GM12878 (cell line): ENCODE measurements at regions of chr15 and their contacts with region 1.

Region 1: GRCh38 chr15:44633603-44634002 is 29.9 kb downstream of the SPG11 start:
- DNase-seq: no peak
- ATAC-seq: peak; percentile 76
- H3K4me3 ChIP-seq: no peak overlapping the region
- H3K27ac ChIP-seq: peak overlapping the region; percentile 35; the same call in 1 of the 2 replicates
- H3K4me1 ChIP-seq: no peaks in the 10 kb centered on the region
- H3K27me3 ChIP-seq: no peaks in the 10 kb centered on the region
- CTCF ChIP-seq: no peak
- EP300 ChIP-seq: no peak
- POLR2A ChIP-seq: no peak
- RAD21 ChIP-seq: no peak

Region 2: DNA sequence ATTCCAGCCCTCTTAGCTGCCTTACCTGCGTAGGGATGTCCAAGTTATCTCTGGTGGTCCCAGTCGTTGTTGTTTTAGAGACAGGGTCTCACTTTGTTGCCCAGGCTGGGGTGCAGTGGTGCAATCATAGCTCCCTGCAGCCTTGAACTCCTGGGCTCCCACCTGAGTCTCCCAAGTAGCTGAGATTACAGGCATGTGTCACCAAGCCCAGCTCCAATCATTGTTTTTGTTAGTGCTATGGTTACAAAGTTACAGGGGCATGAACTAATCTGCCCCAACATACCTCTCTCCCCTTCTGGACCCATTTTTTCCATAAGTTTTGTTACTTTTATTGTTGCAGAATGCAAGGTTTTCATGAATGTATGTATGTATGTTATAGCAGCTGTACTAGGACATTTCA is 151.5 kb before region 1 on chr15:
- CTCF ChIA-PET with region 1: no interaction called
- POLR2A ChIA-PET with region 1: interaction called, 10 read pairs
- RAD21 ChIA-PET with region 1: no interaction called
- SMC1A ChIA-PET with region 1: no interaction called
- in situ Hi-C with region 1: no loop called
- intact Hi-C with region 1: no loop called
- DNase-seq: no peak
- ATAC-seq: no peak
- H3K4me3 ChIP-seq: no peak overlapping the region
- H3K27ac ChIP-seq: no peak overlapping the region
- H3K4me1 ChIP-seq: peaks cover 6% of the 10 kb centered on the region; the same call in 1 of the 2 replicates
- H3K27me3 ChIP-seq: no peaks in the 10 kb centered on the region
- CTCF ChIP-seq: no peak
- EP300 ChIP-seq: no peak
- POLR2A ChIP-seq: no peak
- RAD21 ChIP-seq: no peak

Region 3: DNA sequence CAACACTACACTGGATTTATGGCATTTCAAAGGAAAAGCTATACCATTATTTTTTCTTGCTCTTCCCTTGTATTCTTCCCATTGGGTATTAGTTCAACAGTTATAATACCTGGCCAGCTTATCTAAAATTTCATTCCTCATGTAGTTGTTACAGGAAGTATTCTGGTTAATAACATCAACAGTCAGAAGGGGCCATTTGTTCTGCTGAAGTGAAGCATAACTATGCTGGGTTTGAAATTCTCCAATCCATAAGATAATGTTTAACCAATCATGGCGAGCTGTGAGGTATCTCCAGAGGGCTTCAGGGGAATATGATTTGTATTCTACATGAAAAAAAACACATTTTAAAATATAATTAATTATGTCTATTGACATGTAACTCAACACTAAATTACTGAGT is 13.5 kb before region 1 on chr15:
- CTCF ChIA-PET with region 1: interaction called, 14 read pairs
- POLR2A ChIA-PET with region 1: interaction called, 4 read pairs
- RAD21 ChIA-PET with region 1: no interaction called
- SMC1A ChIA-PET with region 1: interaction called, 3 read pairs
- in situ Hi-C with region 1: no loop called
- intact Hi-C with region 1: no loop called
- DNase-seq: no peak
- ATAC-seq: no peak
- H3K4me3 ChIP-seq: no peak overlapping the region
- H3K27ac ChIP-seq: no peak overlapping the region
- H3K4me1 ChIP-seq: no peaks in the 10 kb centered on the region
- H3K27me3 ChIP-seq: no peaks in the 10 kb centered on the region
- CTCF ChIP-seq: no peak
- EP300 ChIP-seq: no peak
- POLR2A ChIP-seq: no peak
- RAD21 ChIP-seq: no peak

Region 4: DNA sequence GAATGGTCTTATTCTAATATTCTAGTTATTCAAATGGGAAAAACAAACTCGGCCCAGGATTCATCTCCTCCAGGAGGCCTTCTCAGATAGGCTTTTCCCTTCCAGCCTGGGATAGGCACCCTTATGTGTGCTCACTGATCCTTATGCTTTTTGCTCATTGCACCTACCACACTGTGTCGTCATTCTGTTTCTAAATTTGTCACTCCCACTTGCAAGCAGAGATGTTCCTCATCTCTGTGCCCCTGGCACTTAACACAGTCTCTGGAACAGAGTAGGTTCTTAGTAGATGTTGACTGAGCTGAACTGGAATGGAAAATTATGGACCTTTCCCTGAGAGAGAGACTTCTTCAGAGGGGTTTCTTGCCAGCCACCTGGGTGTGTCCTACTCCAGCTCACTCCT is 48.6 kb after region 1 on chr15:
- CTCF ChIA-PET with region 1: no interaction called
- POLR2A ChIA-PET with region 1: no interaction called
- RAD21 ChIA-PET with region 1: no interaction called
- SMC1A ChIA-PET with region 1: no interaction called
- in situ Hi-C with region 1: no loop called
- intact Hi-C with region 1: no loop called
- DNase-seq: no peak
- ATAC-seq: peak; percentile 71
- H3K4me3 ChIP-seq: no peak overlapping the region
- H3K27ac ChIP-seq: no peak overlapping the region
- H3K4me1 ChIP-seq: peaks cover 28% of the 10 kb centered on the region
- H3K27me3 ChIP-seq: no peaks in the 10 kb centered on the region
- CTCF ChIP-seq: no peak
- EP300 ChIP-seq: no peak
- POLR2A ChIP-seq: no peak
- RAD21 ChIP-seq: no peak